AG04449 (cell line): ENCODE measurements at regions of chr15 and their contacts with region 1.

Region 1: GRCh38 chr15:57146506-57147201 is 228.2 kb downstream of the TCF12 start:
- DNase-seq: no peak
- H3K4me3 ChIP-seq: peak overlapping the region; percentile 16; the same call in 1 of the 2 replicates
- CTCF ChIP-seq: peak; percentile 47

Region 2: GRCh38 chr15:57111002-57111401 is 35.7 kb before region 1 on chr15:
- CTCF ChIA-PET with region 1: no interaction called
- POLR2A ChIA-PET with region 1: no interaction called
- DNase-seq: no peak
- H3K4me3 ChIP-seq: no peak overlapping the region
- CTCF ChIP-seq: no peak

Region 3: DNA sequence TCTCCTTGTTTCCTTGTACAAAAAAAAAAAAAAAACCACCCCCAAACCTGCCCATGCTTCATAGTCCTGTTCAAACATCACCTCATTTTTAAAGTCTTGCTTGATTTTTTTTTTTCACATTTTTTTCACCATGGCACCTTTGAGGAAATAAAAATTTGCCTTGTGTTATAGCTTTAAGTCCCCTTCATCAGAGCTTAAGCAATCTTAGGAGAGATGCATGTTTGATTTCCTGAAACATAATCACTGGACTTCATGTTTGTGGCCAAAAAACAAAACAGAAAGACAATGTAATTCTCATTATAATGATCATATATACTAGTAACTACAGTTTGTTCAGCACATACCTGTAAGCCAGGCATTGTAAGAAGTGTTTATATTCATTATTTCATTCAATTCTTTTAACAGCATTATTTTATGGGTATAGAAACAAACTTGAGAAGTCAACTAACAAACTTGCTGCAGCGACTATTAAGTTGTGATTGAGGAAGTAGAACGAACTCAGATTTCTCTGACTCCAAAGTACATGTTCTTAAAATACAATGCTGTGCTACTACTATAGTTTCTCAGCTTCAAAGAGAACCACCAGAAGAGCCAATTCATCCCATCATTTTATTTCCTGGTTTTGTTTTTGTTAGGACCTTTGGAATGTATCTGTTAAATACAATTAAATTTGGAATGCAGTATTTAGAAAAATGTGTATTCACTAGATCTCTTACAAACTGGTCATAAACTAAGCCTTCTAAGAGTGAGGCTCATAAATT is 24.4 kb before region 1 on chr15:
- CTCF ChIA-PET with region 1: interaction called, 10 read pairs
- POLR2A ChIA-PET with region 1: no interaction called
- DNase-seq: no peak
- H3K4me3 ChIP-seq: no peak overlapping the region
- CTCF ChIP-seq: no peak

Region 4: DNA sequence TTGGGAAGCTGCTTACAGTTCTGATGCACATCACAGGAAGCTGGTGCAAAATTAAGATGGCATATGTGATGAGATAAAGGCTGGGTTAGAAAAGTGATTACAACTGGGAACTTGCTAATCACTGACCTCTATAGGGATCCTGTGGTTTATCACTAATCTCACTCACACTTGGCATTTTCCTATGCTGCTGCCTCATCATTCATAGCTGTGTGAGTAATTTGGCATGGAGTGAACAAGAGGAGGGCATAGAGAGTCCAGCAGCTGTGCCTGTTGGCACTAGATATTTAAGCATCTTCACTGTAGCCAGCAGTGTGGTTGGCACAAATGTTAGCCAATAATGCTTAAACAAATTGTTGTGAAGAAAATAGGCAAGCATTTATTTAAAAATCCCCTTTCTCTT is 11.9 kb after region 1 on chr15:
- CTCF ChIA-PET with region 1: interaction called, 30 read pairs
- POLR2A ChIA-PET with region 1: no interaction called
- DNase-seq: no peak
- H3K4me3 ChIP-seq: no peak overlapping the region
- CTCF ChIP-seq: no peak

Region 5: DNA sequence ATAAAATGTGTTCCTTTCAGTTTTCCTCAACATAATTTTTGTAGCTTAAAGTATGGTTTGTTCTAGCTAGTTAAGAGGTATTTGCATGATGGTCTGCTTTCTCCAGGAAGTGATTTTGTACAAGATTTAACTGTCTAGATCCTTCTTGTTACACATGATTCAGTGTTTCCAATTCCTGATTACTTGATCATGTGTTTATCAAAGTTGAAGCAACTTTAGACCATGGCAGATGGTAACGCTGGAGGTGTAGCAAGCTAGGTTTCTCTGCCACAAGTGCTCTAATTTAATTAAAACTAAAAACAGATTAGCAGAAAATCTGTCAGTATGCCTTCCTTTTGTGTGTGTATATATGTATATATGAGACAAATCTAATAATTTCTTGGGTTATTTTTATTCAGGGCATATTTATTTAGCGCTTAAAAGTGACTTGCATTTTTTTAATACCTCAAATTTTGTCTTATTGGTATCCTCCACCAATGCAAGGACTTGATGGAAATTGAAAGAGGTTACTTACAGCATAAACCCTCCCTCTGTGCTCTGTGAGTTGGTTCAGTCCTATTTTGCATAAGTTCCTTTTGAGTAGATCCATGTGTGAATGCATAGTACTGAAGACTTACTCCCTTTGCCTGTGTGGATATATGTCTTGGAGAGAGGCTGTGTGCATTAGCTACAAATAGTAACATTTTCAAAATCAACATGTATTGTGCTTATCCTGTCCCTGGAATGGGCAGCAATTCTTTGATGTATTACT is 72.3 kb after region 1 on chr15:
- CTCF ChIA-PET with region 1: interaction called, 122 read pairs
- POLR2A ChIA-PET with region 1: interaction called, 3 read pairs
- DNase-seq: peak; percentile 93
- H3K4me3 ChIP-seq: peak overlapping the region; percentile 62
- CTCF ChIP-seq: no peak

Region 6: GRCh38 chr15:57298204-57298603 is 151.6 kb after region 1 on chr15:
- CTCF ChIA-PET with region 1: interaction called, 16 read pairs
- POLR2A ChIA-PET with region 1: no interaction called
- DNase-seq: no peak
- H3K4me3 ChIP-seq: no peak overlapping the region
- CTCF ChIP-seq: no peak

Region 7: GRCh38 chr15:57340682-57341259 is 194.1 kb after region 1 on chr15:
- CTCF ChIA-PET with region 1: interaction called, 29 read pairs
- POLR2A ChIA-PET with region 1: no interaction called
- DNase-seq: no peak
- H3K4me3 ChIP-seq: no peak overlapping the region
- CTCF ChIP-seq: peak; percentile 65

Region 8: GRCh38 chr15:57541805-57542504 is 395.3 kb after region 1 on chr15:
- CTCF ChIA-PET with region 1: interaction called, 15 read pairs
- POLR2A ChIA-PET with region 1: no interaction called
- DNase-seq: no peak
- H3K4me3 ChIP-seq: no peak overlapping the region
- CTCF ChIP-seq: peak; percentile 84